Left cardiac atrium (tissue), 4 donors: ENCODE measurements at regions of chr4 and their contacts with region 1.

Region 1: GRCh38 chr4:151117371-151117962 is 18.0 kb downstream of the RPS3A start:
- DNase-seq: peak; percentile 42
- ATAC-seq: peak; percentile 59 to 64

Region 2: GRCh38 chr4:151362404-151363164 is 245.1 kb after region 1 on chr4:
- intact Hi-C with region 1: loop called in 1 of 2 experiments (anchors 2 kb)
- DNase-seq: peak; percentile 83
- ATAC-seq: peak; percentile 96